ENCODE measurements at regions of chr14 and their contacts with region 1.

Region 1: GRCh38 chr14:23120541-23121251 is 1.6 kb upstream of the CEBPE start:
- DNase-seq: peak; percentile 58 to 85 (median 76)
- H3K4me3 ChIP-seq: peak overlapping the region; percentile 59
- H3K4me3 Mint-ChIP-seq: peak overlapping the region in 6 of 7 donors; percentile 38 to 77 (median 65)
- H3K27ac ChIP-seq: peak overlapping the region; percentile 10
- H3K27ac Mint-ChIP-seq: peak overlapping the region; percentile 77 to 96 (median 80)
- H3K4me1 ChIP-seq: peaks cover 53% of the 10 kb centered on the region
- H3K4me1 Mint-ChIP-seq: peaks cover 28 to 42% (median 28%) of the 10 kb centered on the region in 3 donors
- H3K27me3 ChIP-seq: no peaks in the 10 kb centered on the region
- H3K27me3 Mint-ChIP-seq: peaks cover 3 to 5% of the 10 kb centered on the region in 2 donors

Region 2: DNA sequence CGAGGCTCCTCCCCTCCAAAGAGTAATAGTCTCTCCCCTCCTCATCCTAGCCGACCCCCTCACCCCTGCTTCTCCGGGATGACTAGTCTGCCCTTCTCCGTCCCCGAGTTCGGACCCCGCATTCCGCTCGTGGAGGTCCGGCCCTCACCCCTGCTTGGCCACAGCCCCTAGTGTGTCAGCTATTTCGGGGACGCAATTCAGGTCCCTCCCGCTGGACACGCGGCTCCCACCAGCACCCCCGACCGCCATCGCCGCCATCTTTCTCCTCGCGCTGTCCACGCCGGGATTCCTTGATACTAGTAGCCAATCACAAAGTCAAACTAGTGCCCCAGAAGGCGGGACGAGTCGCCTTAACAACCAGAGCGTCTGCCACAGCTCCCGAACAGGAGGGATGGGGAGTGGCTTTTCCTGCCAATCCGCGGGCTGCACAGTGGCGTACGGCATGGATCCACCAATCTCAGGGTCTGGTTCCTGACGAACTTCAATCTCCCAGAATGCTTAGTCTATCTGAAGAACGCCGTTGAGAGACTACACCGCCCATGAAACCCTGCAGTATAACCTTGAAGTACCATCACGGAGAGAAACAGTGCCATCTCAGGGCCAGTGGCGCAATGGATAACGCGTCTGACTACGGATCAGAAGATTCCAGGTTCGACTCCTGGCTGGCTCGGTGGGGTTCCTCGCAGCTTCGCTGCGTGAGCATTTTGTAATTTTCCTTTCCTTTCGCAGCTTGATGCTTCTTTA is 191.4 kb before region 1 on chr14 and contains the start of gene PRMT5:
- CTCF ChIA-PET with region 1: no interaction called
- POLR2A ChIA-PET with region 1: no interaction called
- DNase-seq: peak; percentile 95 to 99 (median 97)
- H3K4me3 ChIP-seq: peak within 1 kb of the TSS; percentile 92
- H3K4me3 Mint-ChIP-seq: no peak within 1 kb of the TSS
- H3K27ac ChIP-seq: peak within 1 kb of the TSS; percentile 87
- H3K27ac Mint-ChIP-seq: peak within 1 kb of the TSS in 1 of 8 donors; percentile 16
- H3K4me1 ChIP-seq: peaks cover 18% of the 10 kb centered on the region
- H3K4me1 Mint-ChIP-seq: peaks cover 8 to 21% (median 16%) of the 10 kb centered on the region in 3 donors
- H3K27me3 ChIP-seq: no peaks in the 10 kb centered on the region
- H3K27me3 Mint-ChIP-seq: no peaks in the 10 kb centered on the region
- total RNA-seq, gene PRMT5: 191 to 200 TPM

Region 3: GRCh38 chr14:23056145-23056955 is 64.3 kb before region 1 on chr14:
- CTCF ChIA-PET with region 1: no interaction called
- POLR2A ChIA-PET with region 1: no interaction called
- DNase-seq: peak; percentile 54 to 75 (median 59)
- H3K4me3 ChIP-seq: peak overlapping the region; percentile 47
- H3K4me3 Mint-ChIP-seq: peak overlapping the region; percentile 72 to 95 (median 84)
- H3K27ac ChIP-seq: no peak overlapping the region
- H3K27ac Mint-ChIP-seq: peak overlapping the region; percentile 2 to 95 (median 73)
- H3K4me1 ChIP-seq: peaks cover 14% of the 10 kb centered on the region
- H3K4me1 Mint-ChIP-seq: peaks cover 16 to 19% (median 18%) of the 10 kb centered on the region in 3 donors
- H3K27me3 ChIP-seq: no peaks in the 10 kb centered on the region
- H3K27me3 Mint-ChIP-seq: no peaks in the 10 kb centered on the region

Region 4: DNA sequence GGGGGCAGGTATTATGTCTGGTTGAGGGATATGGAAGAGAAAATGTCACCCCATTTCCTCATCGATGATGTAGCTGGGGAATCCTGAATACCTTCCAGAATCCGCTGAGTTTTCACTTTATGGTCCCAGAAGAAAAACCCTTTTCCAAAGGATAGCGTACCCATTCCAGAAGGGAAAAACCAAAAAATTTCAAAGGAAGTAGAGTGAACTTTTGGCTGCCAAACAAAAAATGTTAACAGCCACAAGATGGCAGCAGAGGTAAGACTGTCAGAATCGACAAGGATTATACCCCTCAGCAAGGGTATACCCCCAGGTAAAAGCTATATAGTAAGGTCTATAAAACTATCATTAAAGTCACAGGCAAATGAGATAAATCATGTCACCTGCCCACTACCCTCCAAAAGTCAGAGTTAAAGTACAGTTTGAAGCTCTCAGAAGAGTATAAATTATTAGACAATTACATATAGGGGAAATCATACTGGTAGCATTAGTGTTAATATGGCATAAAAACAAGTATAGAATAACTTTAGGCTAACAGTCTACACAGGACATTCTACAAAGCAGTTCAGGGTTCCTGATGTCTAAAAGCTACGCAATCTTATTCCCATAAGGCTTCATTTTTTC is 43.8 kb before region 1 on chr14:
- CTCF ChIA-PET with region 1: interaction called, 12 read pairs
- POLR2A ChIA-PET with region 1: no interaction called
- DNase-seq: peak in 2 of 5 donors; percentile 19 to 50
- H3K4me3 ChIP-seq: no peak overlapping the region
- H3K4me3 Mint-ChIP-seq: no peak overlapping the region
- H3K27ac ChIP-seq: no peak overlapping the region
- H3K27ac Mint-ChIP-seq: peak overlapping the region in 3 of 8 donors; percentile 7 to 29 (median 20)
- H3K4me1 ChIP-seq: peaks cover 9% of the 10 kb centered on the region
- H3K4me1 Mint-ChIP-seq: peaks cover 7 to 18% (median 13%) of the 10 kb centered on the region in 3 donors
- H3K27me3 ChIP-seq: no peaks in the 10 kb centered on the region
- H3K27me3 Mint-ChIP-seq: no peaks in the 10 kb centered on the region

Region 5: GRCh38 chr14:23130871-23131270 is 10.2 kb after region 1 on chr14:
- CTCF ChIA-PET with region 1: interaction called, 19 read pairs
- POLR2A ChIA-PET with region 1: no interaction called
- DNase-seq: no peak
- H3K4me3 ChIP-seq: no peak overlapping the region
- H3K4me3 Mint-ChIP-seq: no peak overlapping the region
- H3K27ac ChIP-seq: no peak overlapping the region
- H3K27ac Mint-ChIP-seq: no peak overlapping the region
- H3K4me1 ChIP-seq: no peaks in the 10 kb centered on the region
- H3K4me1 Mint-ChIP-seq: peaks cover 0 to 7% (median 1%) of the 10 kb centered on the region in 3 donors
- H3K27me3 ChIP-seq: no peaks in the 10 kb centered on the region
- H3K27me3 Mint-ChIP-seq: peaks cover 9 to 16% of the 10 kb centered on the region in 2 donors

Region 6: DNA sequence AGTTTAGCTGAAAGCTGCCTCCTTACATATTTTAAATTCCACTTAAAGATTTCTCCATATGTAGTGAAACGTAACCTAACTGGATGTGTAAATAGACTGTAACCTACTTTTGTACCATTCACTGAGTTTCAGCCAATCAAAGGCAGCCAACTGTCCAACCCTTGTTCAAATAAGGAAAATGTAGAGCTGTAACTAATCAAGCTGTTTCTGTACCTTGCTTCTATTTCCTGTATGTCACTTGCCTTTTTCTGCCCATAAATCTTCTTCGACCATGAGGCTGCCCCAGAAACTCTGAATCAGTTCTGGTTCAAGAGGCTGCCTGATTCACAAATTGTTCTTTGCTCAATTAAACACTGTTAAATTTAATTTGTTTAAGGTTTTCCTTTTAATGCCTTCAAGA is 56.5 kb after region 1 on chr14:
- CTCF ChIA-PET with region 1: interaction called, 10 read pairs
- POLR2A ChIA-PET with region 1: interaction called, 4 read pairs
- DNase-seq: no peak
- H3K4me3 ChIP-seq: no peak overlapping the region
- H3K4me3 Mint-ChIP-seq: no peak overlapping the region
- H3K27ac ChIP-seq: no peak overlapping the region
- H3K27ac Mint-ChIP-seq: no peak overlapping the region
- H3K4me1 ChIP-seq: peaks cover 2% of the 10 kb centered on the region
- H3K4me1 Mint-ChIP-seq: peaks cover 0 to 3% (median 0%) of the 10 kb centered on the region in 3 donors
- H3K27me3 ChIP-seq: peaks cover 4% of the 10 kb centered on the region
- H3K27me3 Mint-ChIP-seq: peaks cover 12 to 64% of the 10 kb centered on the region in 2 donors

Region 7: GRCh38 chr14:23186913-23187654 is 66.4 kb after region 1 on chr14:
- CTCF ChIA-PET with region 1: interaction called, 21 read pairs
- POLR2A ChIA-PET with region 1: interaction called, 4 read pairs
- DNase-seq: peak in 1 of 5 donors; percentile 41
- H3K4me3 ChIP-seq: no peak overlapping the region
- H3K4me3 Mint-ChIP-seq: no peak overlapping the region
- H3K27ac ChIP-seq: no peak overlapping the region
- H3K27ac Mint-ChIP-seq: no peak overlapping the region
- H3K4me1 ChIP-seq: peaks cover 8% of the 10 kb centered on the region
- H3K4me1 Mint-ChIP-seq: no peaks in the 10 kb centered on the region
- H3K27me3 ChIP-seq: no peaks in the 10 kb centered on the region
- H3K27me3 Mint-ChIP-seq: peaks cover 4 to 20% of the 10 kb centered on the region in 2 donors

Region 8: GRCh38 chr14:23269193-23269592 is 148.5 kb after region 1 on chr14:
- CTCF ChIA-PET with region 1: no interaction called
- POLR2A ChIA-PET with region 1: no interaction called
- DNase-seq: no peak
- H3K4me3 ChIP-seq: no peak overlapping the region
- H3K4me3 Mint-ChIP-seq: no peak overlapping the region
- H3K27ac ChIP-seq: no peak overlapping the region
- H3K27ac Mint-ChIP-seq: no peak overlapping the region
- H3K4me1 ChIP-seq: no peaks in the 10 kb centered on the region
- H3K4me1 Mint-ChIP-seq: no peaks in the 10 kb centered on the region
- H3K27me3 ChIP-seq: peaks cover 4% of the 10 kb centered on the region
- H3K27me3 Mint-ChIP-seq: peaks cover 3 to 13% of the 10 kb centered on the region in 2 donors

Region 9: GRCh38 chr14:23301288-23301968 is 180.7 kb after region 1 on chr14:
- CTCF ChIA-PET with region 1: interaction called, 5 read pairs
- POLR2A ChIA-PET with region 1: interaction called, 10 read pairs
- DNase-seq: peak; percentile 93 to 99 (median 97)
- H3K4me3 ChIP-seq: peak overlapping the region; percentile 96
- H3K4me3 Mint-ChIP-seq: peak overlapping the region; percentile 86 to 98 (median 95)
- H3K27ac ChIP-seq: peak overlapping the region; percentile 96
- H3K27ac Mint-ChIP-seq: peak overlapping the region; percentile 91 to 99 (median 96)
- H3K4me1 ChIP-seq: peaks cover 21% of the 10 kb centered on the region
- H3K4me1 Mint-ChIP-seq: peaks cover 17 to 30% (median 28%) of the 10 kb centered on the region in 3 donors
- H3K27me3 ChIP-seq: peaks cover 3% of the 10 kb centered on the region
- H3K27me3 Mint-ChIP-seq: peaks cover 10 to 12% of the 10 kb centered on the region in 2 donors

Region 10: GRCh38 chr14:23379366-23380196 is 258.9 kb after region 1 on chr14:
- CTCF ChIA-PET with region 1: interaction called, 12 read pairs
- POLR2A ChIA-PET with region 1: no interaction called
- DNase-seq: peak; percentile 49 to 74 (median 56)
- H3K4me3 ChIP-seq: no peak overlapping the region
- H3K4me3 Mint-ChIP-seq: no peak overlapping the region
- H3K27ac ChIP-seq: no peak overlapping the region
- H3K27ac Mint-ChIP-seq: no peak overlapping the region
- H3K4me1 ChIP-seq: no peaks in the 10 kb centered on the region
- H3K4me1 Mint-ChIP-seq: no peaks in the 10 kb centered on the region
- H3K27me3 ChIP-seq: no peaks in the 10 kb centered on the region
- H3K27me3 Mint-ChIP-seq: peaks cover 13 to 25% of the 10 kb centered on the region in 2 donors

Region 11: DNA sequence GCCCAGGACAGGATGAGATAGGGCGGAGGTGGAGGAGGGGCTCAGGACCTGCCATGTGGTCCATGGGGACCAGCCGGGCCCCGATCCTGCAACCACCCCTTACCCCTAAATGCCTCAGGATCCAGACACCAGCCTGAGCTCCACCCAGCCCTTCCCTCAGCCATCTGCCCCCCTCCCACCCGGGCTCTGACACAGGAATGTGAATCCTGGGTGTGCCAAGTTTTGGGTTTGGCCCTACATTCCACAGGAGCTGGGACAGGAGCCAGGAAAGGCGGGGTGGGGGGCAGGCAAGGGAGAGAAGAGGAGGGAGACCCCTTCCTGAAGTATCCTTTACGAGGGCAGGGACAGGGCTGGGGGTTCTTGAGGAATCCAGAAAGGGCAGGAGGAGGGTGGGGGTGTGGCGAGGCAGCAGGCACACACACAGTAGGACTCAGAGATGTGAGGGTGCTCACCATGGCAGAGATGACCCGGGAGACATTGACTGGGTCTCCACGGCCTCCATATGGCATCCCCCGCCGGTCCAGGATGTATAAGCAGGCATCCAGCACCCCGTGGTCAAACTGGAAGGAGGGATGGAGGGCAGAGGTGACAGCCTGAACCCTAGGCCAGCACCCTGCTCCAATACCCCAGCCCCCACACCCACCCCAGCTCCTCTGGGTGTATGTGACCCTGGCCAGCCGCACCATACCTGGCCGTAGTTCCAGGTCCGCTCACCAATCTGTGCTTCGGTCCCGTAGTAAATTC is 1138.7 kb after region 1 on chr14:
- CTCF ChIA-PET with region 1: no interaction called
- POLR2A ChIA-PET with region 1: no interaction called
- DNase-seq: no peak
- H3K4me3 ChIP-seq: no peak overlapping the region
- H3K4me3 Mint-ChIP-seq: no peak overlapping the region
- H3K27ac ChIP-seq: no peak overlapping the region
- H3K27ac Mint-ChIP-seq: no peak overlapping the region
- H3K4me1 ChIP-seq: no peaks in the 10 kb centered on the region
- H3K4me1 Mint-ChIP-seq: no peaks in the 10 kb centered on the region
- H3K27me3 ChIP-seq: no peaks in the 10 kb centered on the region
- H3K27me3 Mint-ChIP-seq: no peaks in the 10 kb centered on the region

Measured in CD8-positive, alpha-beta memory T cell (primary cell).